Activated CD4-positive, alpha-beta T cell treated with anti-CD3 and anti-CD28 coated beads for 36 hours (primary cell): ENCODE measurements at regions of chr5 and their contacts with region 1.

Region 1: GRCh38 chr5:55994574-55995333 is at the start of gene IL6ST:
- DNase-seq: peak; percentile 98
- ATAC-seq: peak; percentile 90
- H3K4me3 Mint-ChIP-seq: peak within 1 kb of the TSS; percentile 86
- H3K27ac Mint-ChIP-seq: peak within 1 kb of the TSS; percentile 97
- H3K4me1 Mint-ChIP-seq: peaks cover 60% of the 10 kb centered on the region
- H3K27me3 Mint-ChIP-seq: no peaks in the 10 kb centered on the region
- total RNA-seq, gene IL6ST: 57.1 to 64.4 TPM

Region 2: DNA sequence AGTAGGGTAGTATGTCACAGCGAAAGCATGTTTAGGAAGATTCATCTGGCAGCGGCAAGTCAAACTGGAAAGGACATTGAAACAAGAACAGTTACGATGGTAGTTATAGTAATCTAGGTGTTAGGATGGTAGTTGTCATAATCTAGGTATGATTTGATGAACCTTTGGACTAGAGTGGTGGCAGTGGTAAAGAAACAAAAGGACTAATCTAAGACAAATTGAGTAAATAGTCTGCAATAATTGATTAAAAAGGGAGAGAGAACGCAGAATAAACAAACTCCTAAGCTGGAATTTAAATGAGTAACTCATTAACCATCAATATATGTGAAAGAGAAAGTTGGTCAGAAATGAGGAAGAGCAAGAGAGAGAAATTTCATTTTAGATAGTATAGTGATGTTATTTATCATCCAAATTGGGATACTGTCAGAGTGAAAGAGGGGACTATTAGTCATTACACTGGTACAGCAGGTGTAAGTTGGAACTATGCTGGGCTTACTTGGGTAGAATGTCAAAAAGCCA is 630.2 kb before region 1 on chr5:
- CTCF ChIA-PET with region 1: no interaction called
- POLR2A ChIA-PET with region 1: no interaction called
- intact Hi-C with region 1: loop called in 1 of 2 experiments (anchors 1 kb)
- DNase-seq: peak; percentile 31
- ATAC-seq: peak; percentile 94
- H3K4me3 Mint-ChIP-seq: peak overlapping the region; percentile 2
- H3K27ac Mint-ChIP-seq: peak overlapping the region; percentile 69
- H3K4me1 Mint-ChIP-seq: peaks cover 22% of the 10 kb centered on the region
- H3K27me3 Mint-ChIP-seq: no peaks in the 10 kb centered on the region

Region 3: GRCh38 chr5:55577353-55578060 is 417.2 kb before region 1 on chr5:
- CTCF ChIA-PET with region 1: no interaction called
- POLR2A ChIA-PET with region 1: no interaction called
- intact Hi-C with region 1: no loop called
- DNase-seq: no peak
- ATAC-seq: no peak
- H3K4me3 Mint-ChIP-seq: no peak overlapping the region
- H3K27ac Mint-ChIP-seq: no peak overlapping the region
- H3K4me1 Mint-ChIP-seq: peaks cover 21% of the 10 kb centered on the region
- H3K27me3 Mint-ChIP-seq: no peaks in the 10 kb centered on the region

Region 4: DNA sequence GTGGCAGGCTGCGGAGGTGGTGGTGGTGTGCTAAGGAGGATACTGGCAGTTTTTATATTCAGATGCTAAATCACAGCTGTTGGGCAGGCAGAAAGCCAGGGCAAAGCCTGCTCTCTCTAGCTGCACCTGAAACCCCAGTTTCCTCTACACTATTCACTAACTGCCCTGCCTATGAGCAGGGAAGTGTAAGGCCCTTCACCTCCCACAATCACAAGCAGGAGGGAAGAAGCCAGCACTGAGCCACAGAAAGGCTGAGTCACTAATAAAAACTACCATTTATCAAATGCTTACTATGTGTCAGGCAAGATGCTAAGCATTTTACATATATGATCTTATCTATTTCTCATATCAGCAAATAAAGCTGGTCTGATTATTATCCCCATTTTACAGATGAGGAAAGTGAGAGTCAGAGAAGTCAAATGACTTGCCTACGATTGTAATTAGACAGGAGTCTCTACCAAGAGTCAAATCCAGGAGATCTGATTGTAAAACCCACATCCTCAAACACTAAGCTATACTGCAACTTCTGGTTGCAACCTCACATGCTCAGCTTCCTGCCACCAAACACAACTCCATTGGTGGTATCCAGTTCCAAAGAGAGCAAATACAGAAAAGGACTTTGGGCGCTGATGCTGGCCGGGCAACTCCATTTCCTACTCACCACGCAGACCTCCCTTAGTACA is 17.7 kb after region 1 on chr5:
- CTCF ChIA-PET with region 1: interaction called, 6 read pairs
- POLR2A ChIA-PET with region 1: interaction called, 4 read pairs
- intact Hi-C with region 1: loop called (anchors 1 kb)
- DNase-seq: peak; percentile 57
- ATAC-seq: peak; percentile 74
- H3K4me3 Mint-ChIP-seq: peak overlapping the region; percentile 3
- H3K27ac Mint-ChIP-seq: peak overlapping the region; percentile 61
- H3K4me1 Mint-ChIP-seq: peaks cover 48% of the 10 kb centered on the region
- H3K27me3 Mint-ChIP-seq: no peaks in the 10 kb centered on the region

Region 5: DNA sequence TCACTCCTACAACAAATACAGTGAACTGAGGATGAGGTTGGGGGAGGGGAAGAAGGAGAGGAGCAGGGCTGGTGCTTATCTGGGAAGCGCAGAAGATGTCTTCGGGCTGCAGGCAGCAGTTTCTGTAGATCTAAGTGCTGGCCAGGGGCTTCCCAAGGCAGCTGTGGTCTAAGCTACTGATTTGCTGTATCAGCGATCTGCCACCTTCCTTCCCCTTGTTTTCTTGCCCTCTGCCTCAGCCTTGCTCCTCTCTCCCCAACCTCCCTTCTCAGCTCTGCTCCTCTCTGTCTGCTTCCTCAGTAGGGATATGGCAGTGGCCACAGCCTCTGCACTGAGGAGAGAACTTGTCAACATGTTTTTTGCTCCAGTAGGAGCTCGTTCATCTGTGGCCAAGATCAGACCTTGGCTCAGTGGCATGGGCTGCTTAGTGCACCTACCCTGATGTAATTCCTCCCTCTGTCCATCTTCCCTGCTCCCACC is 42.8 kb after region 1 on chr5:
- CTCF ChIA-PET with region 1: no interaction called
- POLR2A ChIA-PET with region 1: no interaction called
- intact Hi-C with region 1: no loop called
- DNase-seq: no peak
- ATAC-seq: peak; percentile 42
- H3K4me3 Mint-ChIP-seq: no peak overlapping the region
- H3K27ac Mint-ChIP-seq: peak overlapping the region; percentile 9
- H3K4me1 Mint-ChIP-seq: peaks cover 12% of the 10 kb centered on the region
- H3K27me3 Mint-ChIP-seq: no peaks in the 10 kb centered on the region

Region 6: DNA sequence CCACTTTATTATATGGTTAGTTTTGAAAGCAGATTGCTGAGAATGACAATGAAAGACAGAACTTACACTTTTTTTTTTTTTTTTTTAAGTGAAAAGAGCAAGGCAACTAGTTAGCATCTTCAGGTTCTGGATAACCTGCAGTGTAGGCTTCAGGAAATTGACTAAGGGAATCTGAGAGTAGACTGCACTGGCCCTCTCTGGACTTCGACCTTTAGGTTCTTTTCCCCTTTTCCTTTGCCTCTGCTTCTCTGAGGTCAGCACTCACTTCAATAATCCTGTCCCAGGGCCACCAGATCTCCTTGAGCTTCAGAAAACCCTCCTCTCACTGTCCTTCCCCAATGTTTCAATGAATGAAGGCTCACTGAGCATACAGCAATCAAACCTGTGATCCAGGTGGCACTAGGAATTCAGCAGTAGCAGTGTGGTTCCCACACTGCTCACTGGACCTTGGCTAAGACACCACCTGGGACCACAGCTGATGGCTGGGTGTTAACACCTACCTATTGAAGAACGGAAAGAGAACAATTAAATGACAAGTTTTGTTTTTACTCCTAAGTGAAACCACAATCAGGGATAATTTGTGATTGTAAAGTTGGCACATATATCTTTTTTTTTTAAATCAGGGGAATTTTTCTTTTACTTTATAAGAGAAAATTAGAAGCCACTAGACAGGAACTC is 85.8 kb after region 1 on chr5:
- CTCF ChIA-PET with region 1: interaction called, 3 read pairs
- POLR2A ChIA-PET with region 1: no interaction called
- intact Hi-C with region 1: loop called in 1 of 2 experiments (anchors 2 kb)
- DNase-seq: peak; percentile 46
- ATAC-seq: peak; percentile 71
- H3K4me3 Mint-ChIP-seq: peak overlapping the region; percentile 43
- H3K27ac Mint-ChIP-seq: peak overlapping the region; percentile 92
- H3K4me1 Mint-ChIP-seq: peaks cover 54% of the 10 kb centered on the region
- H3K27me3 Mint-ChIP-seq: no peaks in the 10 kb centered on the region

Region 7: GRCh38 chr5:56148453-56148971 is 153.8 kb after region 1 on chr5:
- CTCF ChIA-PET with region 1: no interaction called
- POLR2A ChIA-PET with region 1: interaction called, 4 read pairs
- intact Hi-C with region 1: loop called (anchors 2 to 5 kb)
- DNase-seq: peak; percentile 76
- ATAC-seq: peak; percentile 82
- H3K4me3 Mint-ChIP-seq: peak overlapping the region; percentile 41
- H3K27ac Mint-ChIP-seq: peak overlapping the region; percentile 80
- H3K4me1 Mint-ChIP-seq: peaks cover 71% of the 10 kb centered on the region
- H3K27me3 Mint-ChIP-seq: no peaks in the 10 kb centered on the region

Region 8: GRCh38 chr5:56328753-56329560 is 334.2 kb after region 1 on chr5:
- CTCF ChIA-PET with region 1: no interaction called
- POLR2A ChIA-PET with region 1: interaction called, 6 read pairs
- intact Hi-C with region 1: loop called (anchors 5 to 10 kb)
- DNase-seq: peak; percentile 68
- ATAC-seq: peak; percentile 69
- H3K4me3 Mint-ChIP-seq: peak overlapping the region; percentile 34
- H3K27ac Mint-ChIP-seq: peak overlapping the region; percentile 93
- H3K4me1 Mint-ChIP-seq: peaks cover 66% of the 10 kb centered on the region
- H3K27me3 Mint-ChIP-seq: no peaks in the 10 kb centered on the region